ENCODE measurements at regions of chr10 and their contacts with region 1.

Region 1: DNA sequence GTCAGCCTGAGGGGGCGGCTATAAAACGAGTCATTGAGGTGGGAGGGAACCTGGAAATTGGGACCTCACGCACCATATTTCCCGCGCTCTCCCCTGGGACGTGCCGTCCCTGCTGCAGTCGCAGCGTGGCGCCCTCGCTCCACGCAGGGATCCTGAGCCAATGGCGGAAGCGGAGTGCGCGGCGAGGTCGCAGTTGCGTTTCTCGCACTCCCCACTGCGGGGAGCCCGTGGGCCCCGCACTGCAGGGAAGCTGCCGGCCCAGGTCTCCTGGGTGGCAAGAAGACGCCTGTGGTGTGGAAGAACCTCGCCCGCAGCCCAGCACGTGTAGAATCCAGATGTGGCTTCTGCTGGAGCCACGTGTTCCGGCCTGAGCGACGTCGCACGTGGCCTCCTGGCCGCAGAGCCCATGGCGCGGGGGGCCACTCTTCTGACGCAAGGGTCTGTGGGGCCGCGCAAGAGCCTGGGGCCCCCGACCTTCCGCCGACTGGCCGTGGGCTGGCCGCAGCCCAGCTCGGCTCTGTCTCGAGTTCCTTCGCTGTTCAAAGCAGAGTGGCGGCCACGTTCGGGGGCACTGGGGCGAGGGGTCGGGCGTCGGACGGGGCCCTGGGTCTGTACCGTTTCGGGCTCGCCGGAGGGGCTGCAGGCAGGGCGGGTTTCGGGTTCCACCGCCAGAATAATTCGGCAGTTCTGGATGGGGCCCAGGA is 26.4 kb downstream of the HIF1AN start:
- ATAC-seq: peak; percentile 80 to 93 (median 87)
- H3K4me3 ChIP-seq: no peak overlapping the region
- H3K27ac ChIP-seq: no peak overlapping the region
- H3K4me1 ChIP-seq: no peaks in the 10 kb centered on the region

Region 2: GRCh38 chr10:100743626-100744135 is 181.5 kb after region 1 on chr10:
- in situ Hi-C with region 1: loop called in 3 of 9 experiments (anchors 10 to 25 kb)
- ATAC-seq: peak in 6 of 8 experiments; percentile 12 to 81 (median 56)
- H3K4me3 ChIP-seq: peak overlapping the region in 3 of 5 donors; percentile 33 to 43 (median 35)
- H3K27ac ChIP-seq: no peak overlapping the region
- H3K4me1 ChIP-seq: peaks cover 19 to 40% of the 10 kb centered on the region in 2 donors

Region 3: GRCh38 chr10:100827819-100828737 is 265.9 kb after region 1 on chr10:
- in situ Hi-C with region 1: loop called in 1 of 9 experiments (anchors 25 kb)
- ATAC-seq: peak; percentile 69 to 76 (median 72)
- H3K4me3 ChIP-seq: peak overlapping the region in 4 of 5 donors; percentile 5 to 54 (median 51)
- H3K27ac ChIP-seq: no peak overlapping the region
- H3K4me1 ChIP-seq: peaks cover 14 to 18% of the 10 kb centered on the region in 2 donors

Region 4: DNA sequence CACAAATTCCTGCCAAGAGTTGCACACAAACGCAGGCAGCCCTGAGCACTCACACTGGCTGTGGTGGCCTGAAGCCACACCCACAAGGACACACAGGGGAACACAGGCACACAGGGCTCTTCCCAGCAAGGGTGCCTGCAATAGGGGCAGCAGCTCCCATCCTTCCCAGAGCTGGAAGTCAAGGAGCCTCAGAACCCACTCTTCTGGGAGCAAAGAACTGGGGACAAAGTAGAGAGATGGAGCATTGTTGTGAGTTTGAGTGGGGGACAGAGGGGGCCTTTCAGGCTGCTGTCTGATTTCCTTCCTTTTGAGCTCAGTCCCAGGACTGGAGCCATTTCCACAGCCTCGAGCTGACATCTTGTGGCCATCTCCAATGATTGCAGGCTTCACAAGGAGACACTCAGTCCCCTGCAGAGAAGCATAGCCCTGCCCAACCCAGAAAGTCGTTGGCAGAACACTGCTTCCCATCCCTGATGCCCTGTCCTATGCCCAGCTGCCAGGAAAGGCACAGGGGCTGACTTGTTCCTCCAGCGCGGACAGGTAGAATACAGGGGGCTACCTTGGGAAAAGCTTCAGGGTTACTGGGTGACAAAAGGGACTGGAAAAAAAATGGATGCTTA is 316.2 kb after region 1 on chr10:
- in situ Hi-C with region 1: loop called in 5 of 9 experiments (anchors 10 to 25 kb)
- ATAC-seq: peak; percentile 60 to 99 (median 74)
- H3K4me3 ChIP-seq: no peak overlapping the region
- H3K27ac ChIP-seq: no peak overlapping the region
- H3K4me1 ChIP-seq: peaks cover 37 to 41% of the 10 kb centered on the region in 2 donors

Region 5: DNA sequence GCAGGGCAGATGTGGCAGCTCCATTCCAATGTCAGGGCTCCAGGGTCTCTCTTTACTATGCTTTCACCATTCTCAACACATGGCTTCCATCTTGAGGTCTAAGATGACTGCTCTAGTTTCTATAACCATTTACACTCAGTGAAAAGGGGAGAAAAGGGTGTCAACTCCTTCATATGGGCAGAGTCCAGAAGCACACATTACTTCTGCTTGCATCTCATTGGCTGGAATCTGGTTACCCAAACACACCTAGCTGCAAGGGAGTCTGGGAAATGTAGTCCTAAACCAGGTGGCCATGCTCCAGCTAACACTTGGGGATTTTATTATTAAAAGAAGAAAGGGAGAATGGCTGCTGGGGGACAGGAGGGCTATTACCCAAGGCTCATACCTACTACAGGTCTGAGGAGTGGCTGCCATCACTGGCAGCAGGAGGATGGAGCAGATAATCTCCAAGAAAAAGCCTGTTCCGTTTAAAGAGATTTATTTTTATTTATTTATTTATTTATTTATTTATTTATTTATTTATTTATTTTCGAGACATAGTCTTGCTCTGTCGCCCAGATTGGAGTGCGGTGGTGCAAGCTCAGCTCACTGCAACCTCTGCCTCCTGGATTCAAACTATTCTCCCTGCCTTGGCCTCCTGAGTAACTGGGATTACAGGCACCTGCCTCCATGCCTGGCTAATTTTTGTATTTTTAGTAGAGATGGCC is 696.2 kb after region 1 on chr10:
- in situ Hi-C with region 1: no loop called
- ATAC-seq: peak in 1 of 8 experiments; percentile 58
- H3K4me3 ChIP-seq: no peak overlapping the region
- H3K27ac ChIP-seq: no peak overlapping the region
- H3K4me1 ChIP-seq: peaks cover 22 to 45% of the 10 kb centered on the region in 2 donors

Measured in motor neuron (in vitro differentiated cells).